ENCODE measurements at regions of chr1 and their contacts with region 1.

Region 1: GRCh38 chr1:229258031-229258756 is 12.7 kb upstream of the RAB4A start:
- DNase-seq: peak; percentile 19 to 77 (median 65)
- ATAC-seq: peak; percentile 67
- H3K4me3 ChIP-seq: peak overlapping the region; percentile 7
- H3K4me3 Mint-ChIP-seq: peak overlapping the region in 9 of 10 donors; percentile 9 to 76 (median 61)
- H3K27ac ChIP-seq: no peak overlapping the region
- H3K27ac Mint-ChIP-seq: peak overlapping the region; percentile 14 to 88 (median 67)
- H3K4me1 ChIP-seq: peaks cover 24 to 35% of the 10 kb centered on the region in 2 donors
- H3K4me1 Mint-ChIP-seq: peaks cover 21 to 36% (median 30%) of the 10 kb centered on the region in 7 donors
- H3K27me3 ChIP-seq: no peaks in the 10 kb centered on the region
- H3K27me3 Mint-ChIP-seq: peaks cover 0 to 6% (median 0%) of the 10 kb centered on the region in 5 donors

Region 2: DNA sequence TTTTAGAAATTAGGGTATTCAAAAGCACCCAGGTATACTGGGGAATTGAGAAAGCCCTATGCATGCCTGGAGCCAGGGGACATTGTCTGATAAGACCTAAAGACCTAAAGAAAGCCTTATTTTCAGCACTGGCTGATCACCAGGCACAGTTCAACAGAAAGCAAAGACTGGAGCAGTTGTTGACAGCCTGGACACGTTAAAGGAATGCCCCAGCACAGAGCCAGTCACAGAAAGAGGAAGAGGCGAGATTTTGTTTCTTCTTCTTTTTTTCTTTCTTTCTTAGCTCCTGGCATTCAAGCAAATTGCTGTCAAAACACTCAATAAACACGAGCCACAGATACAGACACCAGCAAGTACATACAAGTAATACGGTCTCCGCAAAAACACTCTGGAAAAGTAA is 730.6 kb before region 1 on chr1:
- CTCF ChIA-PET with region 1: no interaction called
- POLR2A ChIA-PET with region 1: no interaction called
- intact Hi-C with region 1: no loop called
- DNase-seq: no peak
- ATAC-seq: no peak
- H3K4me3 ChIP-seq: no peak overlapping the region
- H3K4me3 Mint-ChIP-seq: no peak overlapping the region
- H3K27ac ChIP-seq: no peak overlapping the region
- H3K27ac Mint-ChIP-seq: no peak overlapping the region
- H3K4me1 ChIP-seq: no peaks in the 10 kb centered on the region
- H3K4me1 Mint-ChIP-seq: peaks cover 0 to 2% (median 0%) of the 10 kb centered on the region in 7 donors
- H3K27me3 ChIP-seq: peaks cover 0 to 8% of the 10 kb centered on the region in 2 donors
- H3K27me3 Mint-ChIP-seq: peaks cover 15 to 66% (median 52%) of the 10 kb centered on the region in 5 donors

Region 3: GRCh38 chr1:228691926-228692325 is 566.3 kb before region 1 on chr1:
- CTCF ChIA-PET with region 1: interaction called, 34 read pairs
- POLR2A ChIA-PET with region 1: interaction called, 4 read pairs
- intact Hi-C with region 1: loop called in 1 of 2 experiments (anchors 1 kb)
- DNase-seq: peak in 7 of 9 donors; percentile 20 to 57 (median 42)
- ATAC-seq: peak; percentile 45
- H3K4me3 ChIP-seq: no peak overlapping the region
- H3K4me3 Mint-ChIP-seq: no peak overlapping the region
- H3K27ac ChIP-seq: no peak overlapping the region
- H3K27ac Mint-ChIP-seq: no peak overlapping the region
- H3K4me1 ChIP-seq: peaks cover 0 to 7% of the 10 kb centered on the region in 2 donors
- H3K4me1 Mint-ChIP-seq: peaks cover 5 to 14% (median 8%) of the 10 kb centered on the region in 7 donors
- H3K27me3 ChIP-seq: no peaks in the 10 kb centered on the region
- H3K27me3 Mint-ChIP-seq: peaks cover 6 to 38% (median 13%) of the 10 kb centered on the region in 5 donors

Region 4: GRCh38 chr1:229130028-229130668 is 128.0 kb before region 1 on chr1:
- CTCF ChIA-PET with region 1: interaction called, 10 read pairs
- POLR2A ChIA-PET with region 1: interaction called, 3 read pairs
- intact Hi-C with region 1: loop called in 1 of 2 experiments (anchors 5 kb)
- DNase-seq: peak in 6 of 9 donors; percentile 55 to 82 (median 62)
- ATAC-seq: peak; percentile 71
- H3K4me3 ChIP-seq: peak overlapping the region; percentile 29
- H3K4me3 Mint-ChIP-seq: peak overlapping the region in 9 of 10 donors; percentile 39 to 83 (median 69)
- H3K27ac ChIP-seq: no peak overlapping the region
- H3K27ac Mint-ChIP-seq: peak overlapping the region in 8 of 9 donors; percentile 15 to 93 (median 80)
- H3K4me1 ChIP-seq: peaks cover 41 to 46% of the 10 kb centered on the region in 2 donors
- H3K4me1 Mint-ChIP-seq: peaks cover 26 to 90% (median 67%) of the 10 kb centered on the region in 7 donors
- H3K27me3 ChIP-seq: no peaks in the 10 kb centered on the region
- H3K27me3 Mint-ChIP-seq: peaks cover 0 to 52% (median 0%) of the 10 kb centered on the region in 5 donors

Region 5: GRCh38 chr1:229244091-229244490 is 14.1 kb before region 1 on chr1:
- CTCF ChIA-PET with region 1: interaction called, 12 read pairs
- POLR2A ChIA-PET with region 1: interaction called, 7 read pairs
- intact Hi-C with region 1: no loop called
- DNase-seq: no peak
- ATAC-seq: no peak
- H3K4me3 ChIP-seq: no peak overlapping the region
- H3K4me3 Mint-ChIP-seq: no peak overlapping the region
- H3K27ac ChIP-seq: no peak overlapping the region
- H3K27ac Mint-ChIP-seq: peak overlapping the region in 1 of 9 donors; percentile 31
- H3K4me1 ChIP-seq: peaks cover 0 to 10% of the 10 kb centered on the region in 2 donors
- H3K4me1 Mint-ChIP-seq: peaks cover 5 to 16% (median 8%) of the 10 kb centered on the region in 7 donors
- H3K27me3 ChIP-seq: no peaks in the 10 kb centered on the region
- H3K27me3 Mint-ChIP-seq: peaks cover 0 to 18% (median 0%) of the 10 kb centered on the region in 5 donors

Region 6: GRCh38 chr1:229440851-229441537 is 182.8 kb after region 1 on chr1:
- CTCF ChIA-PET with region 1: no interaction called
- POLR2A ChIA-PET with region 1: no interaction called
- intact Hi-C with region 1: loop called in 1 of 2 experiments (anchors 1 kb)
- DNase-seq: no peak
- ATAC-seq: no peak
- H3K4me3 ChIP-seq: no peak overlapping the region
- H3K4me3 Mint-ChIP-seq: peak overlapping the region in 1 of 10 donors; percentile 48
- H3K27ac ChIP-seq: no peak overlapping the region
- H3K27ac Mint-ChIP-seq: peak overlapping the region in 5 of 9 donors; percentile 8 to 71 (median 58)
- H3K4me1 ChIP-seq: no peaks in the 10 kb centered on the region
- H3K4me1 Mint-ChIP-seq: peaks cover 0 to 22% (median 0%) of the 10 kb centered on the region in 7 donors
- H3K27me3 ChIP-seq: no peaks in the 10 kb centered on the region
- H3K27me3 Mint-ChIP-seq: peaks cover 0 to 26% (median 0%) of the 10 kb centered on the region in 5 donors

Region 7: GRCh38 chr1:229507951-229508822 is 250.0 kb after region 1 on chr1 and contains the start of gene NUP133:
- CTCF ChIA-PET with region 1: interaction called, 7 read pairs
- POLR2A ChIA-PET with region 1: interaction called, 17 read pairs
- intact Hi-C with region 1: no loop called
- DNase-seq: peak; percentile 93 to 97 (median 97)
- ATAC-seq: peak; percentile 98
- H3K4me3 ChIP-seq: peak within 1 kb of the TSS; percentile 91
- H3K4me3 Mint-ChIP-seq: peak within 1 kb of the TSS; percentile 90 to 98 (median 92)
- H3K27ac ChIP-seq: peak within 1 kb of the TSS; percentile 95
- H3K27ac Mint-ChIP-seq: peak within 1 kb of the TSS; percentile 95 to 99 (median 99)
- H3K4me1 ChIP-seq: peaks cover 4 to 13% of the 10 kb centered on the region in 2 donors
- H3K4me1 Mint-ChIP-seq: peaks cover 10 to 47% (median 38%) of the 10 kb centered on the region in 7 donors
- H3K27me3 ChIP-seq: no peaks in the 10 kb centered on the region
- H3K27me3 Mint-ChIP-seq: peaks cover 0 to 5% (median 2%) of the 10 kb centered on the region in 5 donors
- total RNA-seq, gene NUP133: 24.3 to 45.8 (median 40.4) TPM

Region 8: DNA sequence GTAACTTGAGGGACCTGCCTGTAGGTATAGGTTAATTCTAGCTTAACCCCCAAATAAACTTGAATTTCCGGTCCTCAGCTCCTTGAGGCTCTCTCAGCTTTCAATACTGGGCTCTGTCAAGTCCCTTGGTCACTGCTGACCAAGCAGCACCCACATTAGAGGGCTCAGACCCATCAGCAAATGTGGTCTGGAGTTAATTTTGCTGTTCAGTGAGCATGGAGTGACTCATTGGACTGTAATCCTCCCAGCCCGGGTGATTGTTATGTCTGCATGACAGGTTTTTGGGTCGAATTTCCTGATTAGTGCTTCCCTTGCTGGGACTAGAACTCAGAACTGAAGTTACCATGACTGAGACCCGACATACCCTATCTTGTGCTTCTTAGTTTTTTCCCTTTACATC is 498.5 kb after region 1 on chr1:
- CTCF ChIA-PET with region 1: no interaction called
- POLR2A ChIA-PET with region 1: no interaction called
- intact Hi-C with region 1: no loop called
- DNase-seq: no peak
- ATAC-seq: no peak
- H3K4me3 ChIP-seq: no peak overlapping the region
- H3K4me3 Mint-ChIP-seq: no peak overlapping the region
- H3K27ac ChIP-seq: no peak overlapping the region
- H3K27ac Mint-ChIP-seq: no peak overlapping the region
- H3K4me1 ChIP-seq: peaks cover 0 to 5% of the 10 kb centered on the region in 2 donors
- H3K4me1 Mint-ChIP-seq: peaks cover 7 to 24% (median 14%) of the 10 kb centered on the region in 7 donors
- H3K27me3 ChIP-seq: no peaks in the 10 kb centered on the region
- H3K27me3 Mint-ChIP-seq: peaks cover 0 to 5% (median 0%) of the 10 kb centered on the region in 5 donors

Region 9: DNA sequence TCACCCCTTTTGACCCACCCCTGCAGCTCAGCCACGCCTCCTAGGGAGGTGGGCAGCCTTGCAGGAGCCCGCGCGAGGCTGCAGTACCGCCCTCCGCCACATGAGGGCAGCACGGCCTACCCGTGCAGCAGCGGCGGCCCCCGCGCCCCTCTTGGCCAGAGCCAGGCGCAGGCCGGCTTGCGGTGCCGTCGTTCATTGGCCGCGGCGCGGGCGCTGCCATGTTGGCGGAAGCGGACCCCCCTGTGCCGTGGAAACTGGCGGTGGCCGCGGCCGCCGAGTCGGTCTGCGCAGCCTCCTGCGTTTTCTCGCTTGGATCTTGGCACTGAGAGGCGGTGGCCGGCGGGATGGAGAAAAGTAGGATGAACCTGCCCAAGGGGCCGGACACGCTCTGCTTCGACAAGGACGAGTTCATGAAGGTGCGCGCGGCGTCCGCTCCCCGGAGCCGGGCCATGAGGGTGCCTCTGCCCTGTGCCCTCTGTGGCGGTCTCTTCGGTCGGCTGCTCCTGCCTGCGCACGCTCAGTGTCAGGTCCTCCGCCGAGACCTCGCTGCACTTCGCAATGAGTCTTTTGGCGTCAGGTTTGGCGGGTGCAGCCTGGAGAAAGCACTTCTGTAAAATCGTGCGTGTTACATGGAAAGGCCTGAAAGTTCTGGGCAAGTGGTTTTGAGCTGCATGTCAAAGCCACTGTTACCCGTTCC is 1384.2 kb after region 1 on chr1 and contains the start of gene COG2:
- CTCF ChIA-PET with region 1: interaction called, 4 read pairs
- POLR2A ChIA-PET with region 1: no interaction called
- intact Hi-C with region 1: loop called in 1 of 2 experiments (anchors 10 kb)
- DNase-seq: peak; percentile 84 to 100 (median 91)
- ATAC-seq: peak; percentile 99
- H3K4me3 ChIP-seq: peak within 1 kb of the TSS; percentile 56
- H3K4me3 Mint-ChIP-seq: peak within 1 kb of the TSS; percentile 90 to 100 (median 96)
- H3K27ac ChIP-seq: peak within 1 kb of the TSS; percentile 76
- H3K27ac Mint-ChIP-seq: peak within 1 kb of the TSS; percentile 81 to 98 (median 93)
- H3K4me1 ChIP-seq: peaks cover 20 to 24% of the 10 kb centered on the region in 2 donors
- H3K4me1 Mint-ChIP-seq: peaks cover 36 to 56% (median 48%) of the 10 kb centered on the region in 7 donors
- H3K27me3 ChIP-seq: peaks cover 0 to 7% of the 10 kb centered on the region in 2 donors
- H3K27me3 Mint-ChIP-seq: peaks cover 0 to 24% (median 12%) of the 10 kb centered on the region in 5 donors
- total RNA-seq, gene COG2: 21.6 to 47.5 (median 34.7) TPM